Activated CD4-positive, alpha-beta memory T cell treated with anti-CD3 and anti-CD28 coated beads for 36 hours (primary cell): ENCODE measurements at regions of chrX and their contacts with region 1.

Region 1: GRCh38 chrX:100625985-100626491 is 10.6 kb downstream of the TSPAN6 start:
- DNase-seq: peak; percentile 14
- H3K4me3 Mint-ChIP-seq: no peak overlapping the region
- H3K27ac Mint-ChIP-seq: no peak overlapping the region
- H3K4me1 Mint-ChIP-seq: peaks cover 10% of the 10 kb centered on the region
- H3K27me3 Mint-ChIP-seq: peaks cover 3% of the 10 kb centered on the region

Region 2: DNA sequence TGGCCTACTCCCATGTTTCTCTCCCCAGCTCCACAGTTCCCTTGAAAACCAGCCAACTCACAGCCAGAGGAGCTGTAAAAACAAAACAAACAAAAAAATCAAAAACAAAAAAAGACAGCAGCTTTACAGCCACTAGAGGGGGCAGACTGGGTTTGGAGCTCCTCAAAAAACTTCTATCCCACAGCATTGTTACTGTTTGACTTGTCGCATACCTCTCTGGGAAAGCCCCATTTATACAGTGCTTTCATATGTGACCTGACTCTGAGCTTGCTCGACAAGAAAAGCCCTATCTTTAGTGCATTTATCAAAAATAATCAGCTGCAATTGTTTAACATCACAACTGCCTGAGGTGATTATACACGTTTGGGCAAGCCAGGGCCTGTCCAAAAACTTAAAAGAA is 11.0 kb before region 1 on chrX:
- CTCF ChIA-PET with region 1: interaction called, 5 read pairs
- POLR2A ChIA-PET with region 1: no interaction called
- intact Hi-C with region 1: loop called (anchors 1 kb)
- DNase-seq: no peak
- H3K4me3 Mint-ChIP-seq: no peak overlapping the region
- H3K27ac Mint-ChIP-seq: no peak overlapping the region
- H3K4me1 Mint-ChIP-seq: no peaks in the 10 kb centered on the region
- H3K27me3 Mint-ChIP-seq: peaks cover 4% of the 10 kb centered on the region